ENCODE measurements at regions of chr6 and their contacts with region 1.

Region 1: DNA sequence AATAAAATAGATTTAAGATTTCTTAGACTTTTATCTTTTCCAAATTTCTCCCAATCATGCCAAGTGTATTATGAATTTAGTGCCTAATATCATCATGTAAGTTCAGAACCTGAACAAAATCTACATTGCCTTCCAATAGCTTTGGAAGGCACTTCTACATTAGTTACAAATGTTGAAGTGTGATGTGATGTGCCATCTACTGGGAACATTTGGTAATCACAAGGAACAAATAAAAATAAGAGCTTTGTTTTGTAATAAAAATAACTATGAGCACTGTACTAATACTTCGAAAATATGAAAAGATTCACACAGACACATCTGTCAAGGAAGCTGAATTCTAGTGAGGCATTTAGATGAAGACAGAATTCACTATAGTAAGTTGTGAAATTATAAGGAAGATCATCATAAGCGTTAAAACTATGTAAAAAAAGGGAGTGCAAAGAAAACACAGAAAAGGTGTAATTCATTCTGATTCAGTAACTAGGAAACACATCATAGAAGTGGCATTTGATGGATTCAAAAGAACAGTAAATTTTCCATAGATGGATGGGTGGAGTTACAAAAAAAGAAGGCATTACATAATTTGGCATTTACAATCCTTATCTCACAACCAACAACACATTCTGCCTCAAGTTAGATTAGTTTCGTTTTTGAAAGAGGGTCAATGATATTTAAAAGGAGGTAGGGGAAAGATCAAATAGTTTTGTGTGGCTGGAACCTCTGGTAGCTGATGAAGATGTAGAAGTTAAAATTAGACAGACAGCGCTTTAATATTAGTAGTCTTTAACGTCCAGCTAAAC is 161.0 kb downstream of the ASCC3 start:
- DNase-seq: no peak
- H3K4me3 ChIP-seq: no peak overlapping the region
- H3K27ac ChIP-seq: no peak overlapping the region
- H3K27me3 ChIP-seq: no peaks in the 10 kb centered on the region
- CTCF ChIP-seq: peak; percentile 50

Region 2: DNA sequence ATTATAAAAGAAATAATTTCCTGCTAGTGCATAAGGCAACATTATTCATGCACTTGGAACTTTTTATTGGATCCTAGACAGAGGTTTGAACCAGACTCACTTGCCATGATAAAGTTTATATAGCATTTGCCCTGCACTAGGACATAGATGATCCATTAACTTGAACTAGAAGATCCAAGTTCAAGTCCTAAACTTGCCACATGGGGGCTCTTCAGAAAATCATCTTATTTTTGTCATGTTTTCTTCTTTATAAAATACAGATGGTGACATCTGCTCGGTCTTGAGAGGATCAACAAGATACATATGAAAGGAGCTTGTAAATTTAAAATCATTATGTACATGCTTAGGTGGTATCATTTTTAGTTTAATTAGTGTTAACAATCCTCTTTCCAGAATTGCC is 349.8 kb before region 1 on chr6:
- CTCF ChIA-PET with region 1: no interaction called
- POLR2A ChIA-PET with region 1: no interaction called
- DNase-seq: no peak
- H3K4me3 ChIP-seq: no peak overlapping the region
- H3K27ac ChIP-seq: no peak overlapping the region
- H3K27me3 ChIP-seq: no peaks in the 10 kb centered on the region
- CTCF ChIP-seq: peak; percentile 23; the same call in 1 of the 2 replicates

Region 3: GRCh38 chr6:100678027-100678426 is 42.1 kb before region 1 on chr6:
- CTCF ChIA-PET with region 1: interaction called, 25 read pairs
- POLR2A ChIA-PET with region 1: no interaction called
- DNase-seq: no peak
- H3K4me3 ChIP-seq: no peak overlapping the region
- H3K27ac ChIP-seq: no peak overlapping the region
- H3K27me3 ChIP-seq: no peaks in the 10 kb centered on the region
- CTCF ChIP-seq: 0 out of 2 replicates have a peak, but pooled peaks have one; percentile 20

Region 4: GRCh38 chr6:100730001-100730980 is 10.2 kb after region 1 on chr6:
- CTCF ChIA-PET with region 1: interaction called, 18 read pairs
- POLR2A ChIA-PET with region 1: interaction called, 3 read pairs
- DNase-seq: no peak
- H3K4me3 ChIP-seq: no peak overlapping the region
- H3K27ac ChIP-seq: no peak overlapping the region
- H3K27me3 ChIP-seq: no peaks in the 10 kb centered on the region
- CTCF ChIP-seq: no peak